IMR-90 (cell line): ENCODE measurements at regions of chr3 and their contacts with region 1.

Region 1: DNA sequence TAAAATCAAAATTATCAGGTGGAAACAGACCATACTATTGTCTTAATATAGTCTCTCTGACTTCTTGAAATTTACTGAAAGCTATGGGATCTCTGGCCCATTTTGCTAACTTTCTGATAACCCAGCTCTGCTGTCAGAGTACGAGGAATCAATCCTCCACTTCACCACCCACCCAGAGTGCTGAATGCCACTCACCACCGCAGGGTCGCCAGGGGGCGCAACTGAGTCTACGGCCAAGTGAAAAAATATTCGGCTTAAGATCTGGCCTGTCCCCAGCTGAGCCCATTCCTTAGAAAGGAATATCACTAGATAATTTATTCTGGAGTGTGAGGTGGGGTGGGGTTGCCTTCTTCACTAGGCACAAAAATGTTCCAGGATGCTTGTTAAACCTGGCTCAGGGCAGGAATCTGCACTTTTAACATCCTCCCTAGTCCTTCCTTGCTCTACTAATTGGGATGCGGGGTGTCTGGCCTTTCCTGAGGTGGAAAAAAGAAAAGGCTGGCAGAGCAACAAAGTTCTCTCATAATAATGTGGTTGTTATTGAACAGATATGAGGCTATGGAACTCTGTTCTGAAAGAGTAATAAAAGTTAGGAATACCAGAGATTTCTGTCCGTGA is 520.6 kb downstream of the MFSD1 start:
- DNase-seq: peak; percentile 20
- ATAC-seq: peak; percentile 77
- H3K4me3 ChIP-seq: no peak overlapping the region
- H3K27ac ChIP-seq: no peak overlapping the region
- H3K4me1 ChIP-seq: no peaks in the 10 kb centered on the region
- H3K27me3 ChIP-seq: no peaks in the 10 kb centered on the region
- CTCF ChIP-seq: peak; percentile 72
- POLR2A ChIP-seq: no peak
- RAD21 ChIP-seq: peak; percentile 59

Region 2: GRCh38 chr3:159346271-159346903 is 24.0 kb after region 1 on chr3:
- CTCF ChIA-PET with region 1: no interaction called
- POLR2A ChIA-PET with region 1: no interaction called
- dilution Hi-C with region 1: no loop called
- in situ Hi-C with region 1: no loop called
- intact Hi-C with region 1: no loop called
- DNase-seq: no peak
- ATAC-seq: no peak
- H3K4me3 ChIP-seq: no peak overlapping the region
- H3K27ac ChIP-seq: no peak overlapping the region
- H3K4me1 ChIP-seq: no peaks in the 10 kb centered on the region
- H3K27me3 ChIP-seq: no peaks in the 10 kb centered on the region
- CTCF ChIP-seq: no peak
- POLR2A ChIP-seq: no peak
- RAD21 ChIP-seq: no peak

Region 3: GRCh38 chr3:159458010-159458409 is 135.6 kb after region 1 on chr3:
- CTCF ChIA-PET with region 1: no interaction called
- POLR2A ChIA-PET with region 1: no interaction called
- dilution Hi-C with region 1: no loop called
- in situ Hi-C with region 1: no loop called
- intact Hi-C with region 1: no loop called
- DNase-seq: peak; percentile 97
- ATAC-seq: peak; percentile 87
- H3K4me3 ChIP-seq: no peak overlapping the region
- H3K27ac ChIP-seq: 0 out of 2 replicates have a peak overlapping the region, but pooled peaks have one; percentile 3
- H3K4me1 ChIP-seq: peaks cover 5% of the 10 kb centered on the region
- H3K27me3 ChIP-seq: no peaks in the 10 kb centered on the region
- CTCF ChIP-seq: no peak
- POLR2A ChIP-seq: no peak
- RAD21 ChIP-seq: no peak

Region 4: DNA sequence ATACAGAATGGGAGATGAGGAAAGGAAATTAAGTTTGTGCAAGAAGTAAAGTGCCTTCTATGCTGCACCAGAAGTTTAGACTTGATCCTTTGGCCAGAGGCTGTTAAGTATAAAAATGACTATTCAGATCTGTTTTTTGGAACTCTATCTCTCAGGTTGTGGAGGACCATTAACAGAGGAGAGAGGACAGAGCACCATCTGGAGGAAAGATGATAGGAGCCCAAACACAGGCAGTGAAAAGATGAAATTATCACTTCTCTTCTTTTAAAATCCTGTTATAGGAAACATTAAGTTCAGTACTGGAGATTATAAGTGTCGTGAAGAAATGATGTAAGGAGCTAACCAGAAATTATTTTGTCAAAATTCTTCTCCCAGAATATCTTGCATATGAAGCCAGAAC is 181.5 kb after region 1 on chr3:
- CTCF ChIA-PET with region 1: no interaction called
- POLR2A ChIA-PET with region 1: no interaction called
- dilution Hi-C with region 1: no loop called
- in situ Hi-C with region 1: no loop called
- intact Hi-C with region 1: loop called (anchors 5 kb)
- DNase-seq: no peak
- ATAC-seq: no peak
- H3K4me3 ChIP-seq: no peak overlapping the region
- H3K27ac ChIP-seq: no peak overlapping the region
- H3K4me1 ChIP-seq: no peaks in the 10 kb centered on the region
- H3K27me3 ChIP-seq: peaks cover 4% of the 10 kb centered on the region; the same call in 1 of the 2 replicates
- CTCF ChIP-seq: 0 out of 2 replicates have a peak, but pooled peaks have one; percentile 17
- POLR2A ChIP-seq: no peak
- RAD21 ChIP-seq: no peak

Region 5: DNA sequence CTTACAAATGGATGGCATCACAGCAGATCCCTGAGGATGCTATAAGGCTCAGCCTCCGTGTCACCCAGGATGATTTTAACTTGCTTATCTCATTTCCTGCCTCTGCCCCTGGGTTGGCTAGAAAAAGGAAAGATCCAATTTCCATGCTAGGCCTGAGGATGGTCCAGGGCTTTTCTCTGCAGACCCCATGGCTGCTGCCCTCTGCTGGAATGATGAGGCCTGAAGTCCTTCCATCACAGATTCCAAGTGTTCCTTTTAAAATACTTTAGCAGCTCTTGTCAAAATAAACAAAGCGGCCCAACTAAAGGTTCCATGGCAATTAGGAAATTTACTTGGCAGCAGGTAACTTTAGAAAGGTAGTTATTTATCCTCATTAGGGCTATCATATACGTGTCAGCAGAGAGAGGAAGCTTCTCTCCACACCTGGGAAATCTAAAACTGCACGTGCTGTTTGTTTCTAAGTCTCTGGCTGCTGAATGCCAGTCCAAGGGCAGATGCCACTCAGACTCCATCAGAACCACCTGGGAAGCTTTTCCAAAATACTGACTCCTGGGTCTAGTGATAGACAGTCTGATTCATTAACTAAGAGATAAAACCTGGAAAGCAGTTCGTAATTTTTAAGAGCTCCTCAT is 264.3 kb after region 1 on chr3:
- CTCF ChIA-PET with region 1: interaction called, 3 read pairs
- POLR2A ChIA-PET with region 1: no interaction called
- dilution Hi-C with region 1: no loop called
- in situ Hi-C with region 1: no loop called
- intact Hi-C with region 1: loop called (anchors 1 kb)
- DNase-seq: peak; percentile 63
- ATAC-seq: peak; percentile 91
- H3K4me3 ChIP-seq: no peak overlapping the region
- H3K27ac ChIP-seq: no peak overlapping the region
- H3K4me1 ChIP-seq: peaks cover 2% of the 10 kb centered on the region; the same call in 1 of the 2 replicates
- H3K27me3 ChIP-seq: peaks cover 4% of the 10 kb centered on the region
- CTCF ChIP-seq: peak; percentile 63
- POLR2A ChIP-seq: no peak
- RAD21 ChIP-seq: peak; percentile 75

Region 6: GRCh38 chr3:160099834-160100233 is 777.4 kb after region 1 on chr3:
- CTCF ChIA-PET with region 1: no interaction called
- POLR2A ChIA-PET with region 1: no interaction called
- dilution Hi-C with region 1: no loop called
- in situ Hi-C with region 1: no loop called
- intact Hi-C with region 1: loop called (anchors 5 kb)
- DNase-seq: no peak
- ATAC-seq: no peak
- H3K4me3 ChIP-seq: no peak overlapping the region
- H3K27ac ChIP-seq: no peak overlapping the region
- H3K4me1 ChIP-seq: no peaks in the 10 kb centered on the region
- H3K27me3 ChIP-seq: peaks cover 2% of the 10 kb centered on the region
- CTCF ChIP-seq: no peak
- POLR2A ChIP-seq: no peak
- RAD21 ChIP-seq: no peak

Region 7: DNA sequence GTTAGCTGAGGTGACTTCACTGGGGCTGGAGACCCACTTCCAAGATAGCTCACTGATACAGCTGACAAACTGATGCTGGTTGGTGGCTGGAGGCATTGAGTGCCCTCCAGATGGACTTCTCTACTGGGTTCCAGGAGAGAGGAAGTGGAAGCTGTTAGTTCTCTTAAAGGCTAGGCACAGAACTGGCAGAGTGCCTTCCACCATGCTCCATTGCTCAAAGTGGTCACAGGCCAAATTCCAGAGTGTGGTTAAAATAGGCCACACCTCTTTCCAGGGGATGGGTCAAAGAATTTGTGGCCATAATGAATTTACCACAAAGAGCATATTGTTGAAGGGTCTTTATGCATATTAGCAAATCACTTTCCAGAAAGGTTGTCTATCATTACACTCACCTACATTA is 1972.9 kb after region 1 on chr3:
- CTCF ChIA-PET with region 1: no interaction called
- POLR2A ChIA-PET with region 1: no interaction called
- dilution Hi-C with region 1: no loop called
- in situ Hi-C with region 1: no loop called
- intact Hi-C with region 1: no loop called
- DNase-seq: no peak
- ATAC-seq: no peak
- H3K4me3 ChIP-seq: no peak overlapping the region
- H3K27ac ChIP-seq: no peak overlapping the region
- H3K4me1 ChIP-seq: no peaks in the 10 kb centered on the region
- H3K27me3 ChIP-seq: no peaks in the 10 kb centered on the region
- CTCF ChIP-seq: no peak
- POLR2A ChIP-seq: no peak
- RAD21 ChIP-seq: no peak